H1 (cell line): ENCODE measurements at regions of chr15 and their contacts with region 1.

Region 1: DNA sequence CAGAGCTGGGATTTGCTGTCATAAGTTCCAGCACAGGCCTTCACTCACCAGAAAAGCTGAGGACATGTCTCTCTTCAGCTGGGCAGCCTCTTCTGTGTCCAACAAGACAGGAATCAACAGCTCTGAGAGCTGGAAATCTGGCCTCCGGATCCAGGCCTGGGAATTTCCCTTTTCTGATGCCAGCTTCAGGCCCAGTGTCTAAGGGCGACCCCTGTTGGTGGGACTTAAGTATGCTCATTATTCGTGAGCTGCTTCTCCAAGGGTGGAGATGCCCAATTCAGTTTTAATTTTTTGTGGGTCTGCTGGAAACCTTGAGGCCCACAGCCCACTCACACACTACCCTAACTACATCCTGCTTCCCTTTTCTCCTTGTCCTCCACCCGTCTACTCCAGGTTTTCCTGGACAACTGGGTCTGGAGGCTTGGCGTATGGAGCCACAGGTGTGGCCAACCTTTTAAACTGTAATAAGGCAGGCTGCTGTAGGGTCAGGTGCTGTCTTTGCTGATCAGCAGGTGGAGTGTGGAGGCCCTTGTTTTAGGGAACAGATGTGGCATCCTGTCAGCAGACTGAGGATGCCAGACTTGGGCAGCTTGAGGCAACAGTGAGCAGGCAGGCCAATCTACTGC is 2.6 kb upstream of the CEMIP start:
- DNase-seq: peak; percentile 36 to 83
- H3K4me3 ChIP-seq: no peak overlapping the region
- H3K27ac ChIP-seq: no peak overlapping the region
- H3K4me1 ChIP-seq: peaks cover 0 to 7% (median 4%) of the 10 kb centered on the region in 4 experiments; a peak in 5 of 7 replicates
- H3K27me3 ChIP-seq: peaks cover 4 to 40% (median 33%) of the 10 kb centered on the region in 4 experiments
- CTCF ChIP-seq: peak; percentile 76 to 89 (median 88)
- EP300 ChIP-seq: no peak
- POLR2A ChIP-seq: no peak
- RAD21 ChIP-seq: peak; percentile 93

Region 2: GRCh38 chr15:80343554-80343992 is 433.0 kb before region 1 on chr15:
- CTCF ChIA-PET with region 1: no interaction called
- POLR2A ChIA-PET with region 1: no interaction called
- DNase-seq: no peak
- H3K4me3 ChIP-seq: no peak overlapping the region
- H3K27ac ChIP-seq: no peak overlapping the region
- H3K4me1 ChIP-seq: no peaks in the 10 kb centered on the region
- H3K27me3 ChIP-seq: no peaks in the 10 kb centered on the region
- CTCF ChIP-seq: no peak
- EP300 ChIP-seq: no peak
- POLR2A ChIP-seq: no peak
- RAD21 ChIP-seq: no peak

Region 3: GRCh38 chr15:80580106-80580505 is 196.4 kb before region 1 on chr15:
- CTCF ChIA-PET with region 1: interaction called, 11 read pairs
- POLR2A ChIA-PET with region 1: no interaction called
- DNase-seq: no peak
- H3K4me3 ChIP-seq: no peak overlapping the region
- H3K27ac ChIP-seq: no peak overlapping the region; the same call in 1 of the 2 replicates
- H3K4me1 ChIP-seq: no peaks in the 10 kb centered on the region; a peak in 1 of 7 replicates
- H3K27me3 ChIP-seq: no peaks in the 10 kb centered on the region
- CTCF ChIP-seq: no peak
- EP300 ChIP-seq: no peak
- POLR2A ChIP-seq: no peak
- RAD21 ChIP-seq: no peak

Region 4: GRCh38 chr15:80619680-80620079 is 156.9 kb before region 1 on chr15:
- CTCF ChIA-PET with region 1: interaction called, 14 read pairs
- POLR2A ChIA-PET with region 1: no interaction called
- DNase-seq: peak in 1 of 2 experiments; percentile 13
- H3K4me3 ChIP-seq: no peak overlapping the region
- H3K27ac ChIP-seq: no peak overlapping the region
- H3K4me1 ChIP-seq: no peaks in the 10 kb centered on the region; a peak in 1 of 7 replicates
- H3K27me3 ChIP-seq: peaks cover 0 to 3% (median 0%) of the 10 kb centered on the region in 4 experiments; a peak in 1 of 7 replicates
- CTCF ChIP-seq: no peak
- EP300 ChIP-seq: no peak
- POLR2A ChIP-seq: no peak
- RAD21 ChIP-seq: peak; percentile 12 to 35; a peak in 3 of 4 replicates

Region 5: GRCh38 chr15:80669663-80670273 is 106.8 kb before region 1 on chr15:
- CTCF ChIA-PET with region 1: interaction called, 14 read pairs
- POLR2A ChIA-PET with region 1: no interaction called
- DNase-seq: no peak
- H3K4me3 ChIP-seq: no peak overlapping the region
- H3K27ac ChIP-seq: no peak overlapping the region
- H3K4me1 ChIP-seq: no peaks in the 10 kb centered on the region
- H3K27me3 ChIP-seq: no peaks in the 10 kb centered on the region
- CTCF ChIP-seq: no peak
- EP300 ChIP-seq: no peak
- POLR2A ChIP-seq: no peak
- RAD21 ChIP-seq: no peak

Region 6: GRCh38 chr15:80804965-80805495 is 28.5 kb after region 1 on chr15:
- CTCF ChIA-PET with region 1: interaction called, 11 read pairs
- POLR2A ChIA-PET with region 1: interaction called, 3 read pairs
- DNase-seq: no peak
- H3K4me3 ChIP-seq: no peak overlapping the region
- H3K27ac ChIP-seq: no peak overlapping the region
- H3K4me1 ChIP-seq: peaks cover 0 to 6% (median 3%) of the 10 kb centered on the region in 4 experiments; a peak in 3 of 7 replicates
- H3K27me3 ChIP-seq: peaks cover 0 to 2% (median 0%) of the 10 kb centered on the region in 4 experiments; a peak in 2 of 7 replicates
- CTCF ChIP-seq: no peak
- EP300 ChIP-seq: no peak
- POLR2A ChIP-seq: no peak
- RAD21 ChIP-seq: no peak

Region 7: DNA sequence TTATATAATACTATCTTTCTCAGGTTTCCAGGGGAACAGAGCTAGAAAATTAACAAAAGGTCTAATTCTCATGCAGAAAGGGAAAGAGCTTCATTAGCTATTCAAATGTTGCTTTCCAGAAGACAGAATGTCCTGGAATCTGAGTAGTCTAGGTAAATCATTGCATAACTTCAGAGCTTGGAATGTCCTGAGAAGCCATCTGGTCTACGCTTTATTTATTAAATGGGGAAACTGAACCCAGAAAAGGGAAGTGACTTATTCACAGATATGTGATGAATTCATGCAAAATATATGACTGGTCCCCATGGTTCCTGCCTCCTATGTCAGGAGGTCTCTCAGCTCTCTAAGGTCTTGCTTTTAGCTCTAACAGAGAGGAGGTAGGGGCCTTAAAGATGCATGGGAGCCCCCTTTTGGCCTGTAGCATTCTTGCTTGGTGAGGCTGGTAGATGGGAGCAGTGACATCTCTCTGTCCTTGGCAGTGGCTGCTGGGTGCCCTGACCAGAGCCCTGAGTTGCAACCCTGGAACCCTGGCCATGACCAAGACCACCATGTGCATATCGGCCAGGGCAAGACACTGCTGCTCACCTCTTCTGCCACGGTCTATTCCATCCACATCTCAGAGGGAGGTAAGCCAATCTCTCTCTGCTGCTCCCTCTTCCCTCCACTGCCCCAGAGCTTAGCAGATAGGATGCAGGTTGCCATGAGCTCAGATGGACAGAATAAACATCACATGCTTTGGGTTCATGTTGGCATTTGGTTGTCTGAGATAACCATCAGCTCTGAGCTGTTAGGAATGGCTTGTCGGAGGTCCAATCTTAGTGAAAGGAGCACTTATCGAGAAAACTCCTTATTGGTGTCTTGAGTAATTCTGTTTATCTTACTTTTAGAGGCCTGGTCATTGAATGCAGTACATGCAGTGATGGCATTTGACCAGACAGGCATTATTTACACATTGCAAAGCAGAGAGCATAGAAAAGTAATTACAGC is 102.0 kb after region 1 on chr15:
- CTCF ChIA-PET with region 1: interaction called, 23 read pairs
- POLR2A ChIA-PET with region 1: no interaction called
- DNase-seq: no peak
- H3K4me3 ChIP-seq: no peak overlapping the region
- H3K27ac ChIP-seq: no peak overlapping the region
- H3K4me1 ChIP-seq: peaks cover 0 to 2% (median 0%) of the 10 kb centered on the region in 4 experiments; a peak in 1 of 7 replicates
- H3K27me3 ChIP-seq: no peaks in the 10 kb centered on the region
- CTCF ChIP-seq: peak in 1 of 3 experiments; percentile 20; a peak in 1 of 4 replicates
- EP300 ChIP-seq: no peak
- POLR2A ChIP-seq: no peak
- RAD21 ChIP-seq: peak; percentile 13 to 39; a peak in 2 of 4 replicates